ENCODE measurements at regions of chr3 and their contacts with region 1.

Region 1: DNA sequence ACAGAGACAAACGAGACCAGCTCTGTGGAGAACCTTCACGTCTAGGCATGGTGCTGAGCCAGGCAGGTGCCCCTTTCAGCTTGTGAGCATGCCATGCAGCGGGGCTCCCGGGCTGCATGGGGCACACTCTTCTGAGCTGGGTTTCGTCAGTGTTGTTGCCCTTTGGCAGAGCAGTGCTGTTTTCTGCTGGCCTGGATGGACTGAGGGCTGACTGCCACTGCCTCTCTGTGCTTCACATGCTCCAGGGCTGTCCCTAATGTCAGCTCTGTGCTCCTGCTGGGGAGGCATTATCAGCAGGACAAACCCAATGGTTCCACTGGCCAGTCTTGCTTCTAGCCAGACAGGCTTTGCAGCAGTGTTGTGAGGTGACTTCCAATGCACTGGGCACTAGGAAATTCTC is 9.5 kb downstream of the GASK1A start:
- DNase-seq: no peak
- H3K4me3 ChIP-seq: no peak overlapping the region
- H3K27ac ChIP-seq: peak overlapping the region in 1 of 2 donors; percentile 20
- H3K4me1 ChIP-seq: no peaks in the 10 kb centered on the region
- H3K27me3 ChIP-seq: no peaks in the 10 kb centered on the region
- CTCF ChIP-seq: no peak
- POLR2A ChIP-seq: no peak

Region 2: GRCh38 chr3:43036621-43037423 is 48.3 kb after region 1 on chr3:
- intact Hi-C with region 1: no loop called
- DNase-seq: no peak
- H3K4me3 ChIP-seq: no peak overlapping the region
- H3K27ac ChIP-seq: no peak overlapping the region
- H3K4me1 ChIP-seq: no peaks in the 10 kb centered on the region
- H3K27me3 ChIP-seq: no peaks in the 10 kb centered on the region
- CTCF ChIP-seq: no peak
- POLR2A ChIP-seq: no peak

Region 3: GRCh38 chr3:44080474-44081072 is 1092.0 kb after region 1 on chr3:
- intact Hi-C with region 1: loop called (anchors 5 kb)
- DNase-seq: no peak
- H3K4me3 ChIP-seq: no peak overlapping the region
- H3K27ac ChIP-seq: no peak overlapping the region
- H3K4me1 ChIP-seq: no peaks in the 10 kb centered on the region
- H3K27me3 ChIP-seq: no peaks in the 10 kb centered on the region
- CTCF ChIP-seq: no peak
- POLR2A ChIP-seq: no peak